WTC11 (cell line): ENCODE measurements at regions of chr14 and their contacts with region 1.

Region 1: DNA sequence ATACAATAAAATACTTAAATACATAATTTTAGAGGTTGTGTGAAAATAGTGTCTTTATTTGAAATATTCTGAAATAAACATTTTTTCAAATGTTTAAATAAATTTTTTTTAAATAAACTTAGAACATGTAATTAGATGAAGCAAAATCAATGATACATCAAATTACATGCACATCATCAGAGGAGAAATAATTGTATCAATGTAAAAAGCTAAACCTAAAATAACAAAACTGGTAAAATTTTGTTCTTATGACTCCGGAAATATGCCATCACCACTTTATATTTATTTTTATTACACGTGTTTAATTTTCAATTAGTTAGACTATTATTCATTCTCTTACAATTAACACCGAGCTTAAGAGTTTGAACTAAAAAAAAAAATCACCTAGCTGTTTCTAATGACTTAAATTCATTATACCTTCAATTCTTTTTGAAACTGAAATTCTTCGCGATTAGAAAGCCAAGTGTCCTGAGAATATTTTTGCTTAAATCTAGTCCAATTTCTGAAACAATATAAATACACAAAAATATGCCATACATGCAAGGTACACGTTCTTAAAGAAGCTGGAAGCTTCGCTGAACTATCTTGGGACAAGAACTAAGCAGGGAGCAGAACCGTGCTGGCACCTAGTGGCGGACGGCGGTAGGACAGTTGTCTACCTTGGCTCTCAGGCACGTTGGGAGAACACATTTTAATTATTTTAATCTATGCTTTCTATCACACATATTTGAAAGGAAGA is 230.5 kb downstream of the SLC25A21 start:
- DNase-seq: peak; percentile 82
- ATAC-seq: peak; percentile 88
- H3K4me3 Mint-ChIP-seq: no peak overlapping the region
- H3K27ac Mint-ChIP-seq: no peak overlapping the region
- H3K4me1 Mint-ChIP-seq: peaks cover 5% of the 10 kb centered on the region; the same call in 1 of the 2 replicates
- H3K27me3 Mint-ChIP-seq: no peaks in the 10 kb centered on the region
- CTCF ChIP-seq: peak; percentile 95

Region 2: DNA sequence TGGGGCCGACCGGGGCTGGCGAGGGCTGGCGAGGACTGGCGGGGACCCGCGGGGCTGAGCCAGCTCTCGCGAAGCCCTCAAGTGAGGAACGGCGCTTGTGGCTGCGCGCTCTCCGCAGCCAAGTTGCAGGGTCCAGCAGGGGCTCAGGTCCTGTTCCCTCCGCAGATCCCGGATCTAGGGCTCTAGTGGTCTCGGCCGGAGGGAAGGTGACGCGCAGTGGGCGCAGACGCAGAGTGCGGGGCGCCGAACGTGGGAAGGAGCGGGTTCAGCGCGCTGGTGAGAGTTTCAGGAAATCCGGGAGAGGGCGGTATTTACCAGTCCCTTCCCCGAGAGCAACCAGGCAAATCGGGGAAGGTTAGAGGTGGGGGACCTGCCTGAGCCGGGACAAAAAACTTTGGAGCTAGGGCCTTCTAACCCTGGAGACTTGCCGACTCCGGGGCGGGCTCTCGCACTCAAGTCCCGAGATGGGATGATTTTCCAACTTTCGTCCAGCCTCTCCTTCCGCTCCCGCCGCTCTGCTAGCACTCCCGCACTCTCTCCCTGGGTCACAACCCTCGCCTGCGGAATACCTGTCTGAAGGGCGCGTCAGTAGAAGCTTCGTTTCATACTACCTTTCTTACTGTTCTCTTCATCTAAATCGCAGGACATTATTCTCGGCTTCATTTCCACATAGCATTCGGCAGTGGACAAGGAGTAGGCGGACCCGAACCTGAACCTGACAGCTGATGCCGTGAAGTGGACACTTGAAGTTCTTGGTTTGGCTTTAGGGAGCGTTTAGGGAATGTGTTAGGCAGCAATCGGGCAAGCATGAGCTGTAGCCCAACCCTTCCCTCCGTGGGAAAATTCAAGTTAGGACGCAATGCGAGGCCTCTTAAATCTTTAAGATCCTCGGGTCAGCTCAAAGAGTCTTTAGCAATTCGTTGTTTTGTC is 293.9 kb before region 1 on chr14:
- CTCF ChIA-PET with region 1: interaction called, 79 read pairs
- POLR2A ChIA-PET with region 1: no interaction called
- DNase-seq: peak; percentile 70
- ATAC-seq: peak; percentile 83
- H3K4me3 Mint-ChIP-seq: peak overlapping the region; percentile 69
- H3K27ac Mint-ChIP-seq: no peak overlapping the region
- H3K4me1 Mint-ChIP-seq: peaks cover 8% of the 10 kb centered on the region
- H3K27me3 Mint-ChIP-seq: peaks cover 100% of the 10 kb centered on the region
- CTCF ChIP-seq: no peak; the same call in 1 of the 2 replicates

Region 3: DNA sequence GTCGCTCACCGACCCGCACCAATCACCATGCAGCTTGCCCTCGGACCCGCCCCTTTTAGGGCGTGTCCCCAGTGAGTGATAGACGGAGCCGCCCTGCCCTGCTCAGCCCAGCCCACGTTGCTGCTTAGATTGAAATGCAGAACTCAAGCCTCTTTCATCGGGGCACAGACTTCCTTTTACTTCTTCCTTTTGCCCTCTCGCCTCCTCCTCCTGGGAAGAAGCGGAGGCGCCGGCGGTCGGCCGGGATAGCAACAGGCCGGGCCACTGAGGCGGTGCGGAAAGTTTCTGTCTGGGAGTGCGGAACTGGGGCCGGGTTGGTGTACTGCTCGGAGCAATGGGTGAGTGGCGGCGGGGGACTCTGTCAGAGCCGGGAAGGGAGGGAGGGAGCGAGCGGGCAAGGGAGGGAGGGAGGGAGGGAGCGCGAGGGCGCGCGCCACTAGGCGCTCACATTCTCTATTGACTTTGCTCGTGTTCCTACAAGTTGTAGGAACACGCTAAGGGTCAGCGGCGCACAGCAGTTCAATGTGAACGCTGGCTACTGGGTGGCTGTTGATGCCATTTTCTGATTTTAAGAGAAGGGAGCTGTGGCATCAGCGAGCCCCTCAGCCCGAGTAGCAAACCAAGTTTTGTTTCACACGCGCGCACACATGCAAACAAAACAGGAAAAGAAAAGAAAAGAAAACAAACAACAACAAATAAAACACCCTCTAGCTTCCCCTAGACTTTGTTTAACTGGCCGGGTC is 280.0 kb before region 1 on chr14 and contains the start of gene PAX9:
- CTCF ChIA-PET with region 1: interaction called, 31 read pairs
- POLR2A ChIA-PET with region 1: interaction called, 3 read pairs
- DNase-seq: peak; percentile 96
- ATAC-seq: peak; percentile 81
- H3K4me3 Mint-ChIP-seq: peak within 1 kb of the TSS; percentile 76
- H3K27ac Mint-ChIP-seq: no peak within 1 kb of the TSS
- H3K4me1 Mint-ChIP-seq: peaks cover 51% of the 10 kb centered on the region
- H3K27me3 Mint-ChIP-seq: peaks cover 100% of the 10 kb centered on the region
- CTCF ChIP-seq: no peak
- total RNA-seq, gene PAX9: not detected in 3 replicates

Region 4: DNA sequence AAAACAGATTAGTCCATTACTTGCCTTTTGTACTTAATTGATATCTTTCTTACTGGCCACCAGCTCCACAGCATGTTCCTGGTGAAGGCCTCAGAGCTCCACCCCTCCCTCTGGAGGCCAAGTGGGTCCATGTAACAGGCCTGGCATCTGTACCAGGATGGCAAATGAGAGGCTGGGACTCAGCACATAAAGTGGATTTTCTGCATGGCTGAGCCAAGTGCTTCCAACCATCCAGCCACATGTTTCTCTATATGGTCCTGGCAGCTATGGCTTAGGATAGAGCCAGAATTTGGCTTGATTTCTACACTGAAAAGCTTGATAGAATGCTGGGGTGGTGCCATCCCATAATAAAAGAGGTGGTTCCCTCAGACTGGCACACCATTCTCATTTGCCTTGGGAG is 186.2 kb before region 1 on chr14:
- CTCF ChIA-PET with region 1: interaction called, 10 read pairs
- POLR2A ChIA-PET with region 1: no interaction called
- DNase-seq: no peak
- ATAC-seq: no peak
- H3K4me3 Mint-ChIP-seq: no peak overlapping the region
- H3K27ac Mint-ChIP-seq: no peak overlapping the region
- H3K4me1 Mint-ChIP-seq: peaks cover 15% of the 10 kb centered on the region
- H3K27me3 Mint-ChIP-seq: no peaks in the 10 kb centered on the region
- CTCF ChIP-seq: no peak

Region 5: GRCh38 chr14:36773136-36773540 is 168.8 kb before region 1 on chr14:
- CTCF ChIA-PET with region 1: interaction called, 15 read pairs
- POLR2A ChIA-PET with region 1: interaction called, 3 read pairs
- DNase-seq: no peak
- ATAC-seq: peak; percentile 73
- H3K4me3 Mint-ChIP-seq: no peak overlapping the region
- H3K27ac Mint-ChIP-seq: no peak overlapping the region
- H3K4me1 Mint-ChIP-seq: peaks cover 10% of the 10 kb centered on the region
- H3K27me3 Mint-ChIP-seq: no peaks in the 10 kb centered on the region
- CTCF ChIP-seq: no peak

Region 6: DNA sequence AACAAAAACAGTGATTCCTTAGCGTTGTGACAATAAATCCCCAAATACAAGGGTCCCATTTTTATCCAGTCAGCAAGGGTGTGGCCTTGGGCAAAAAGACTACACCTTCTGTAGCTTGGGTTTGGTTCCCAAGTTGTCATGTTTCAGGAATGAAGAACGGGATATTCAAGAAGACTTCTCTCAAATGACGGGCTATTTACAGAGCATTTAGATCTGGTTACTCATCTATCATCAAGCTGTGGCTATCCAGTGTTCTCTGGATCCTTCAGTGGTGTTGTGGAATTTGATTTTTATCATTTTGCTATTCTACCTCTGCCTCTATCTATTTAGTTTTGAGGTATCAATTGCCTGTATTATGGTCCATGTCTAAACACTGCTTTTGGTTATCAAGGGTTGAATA is 10.8 kb after region 1 on chr14:
- CTCF ChIA-PET with region 1: interaction called, 17 read pairs
- POLR2A ChIA-PET with region 1: no interaction called
- DNase-seq: no peak
- ATAC-seq: no peak
- H3K4me3 Mint-ChIP-seq: no peak overlapping the region
- H3K27ac Mint-ChIP-seq: no peak overlapping the region
- H3K4me1 Mint-ChIP-seq: peaks cover 32% of the 10 kb centered on the region
- H3K27me3 Mint-ChIP-seq: no peaks in the 10 kb centered on the region
- CTCF ChIP-seq: no peak

Region 7: GRCh38 chr14:37124615-37125014 is 182.7 kb after region 1 on chr14:
- CTCF ChIA-PET with region 1: interaction called, 10 read pairs
- POLR2A ChIA-PET with region 1: no interaction called
- DNase-seq: peak; percentile 45
- ATAC-seq: peak; percentile 88
- H3K4me3 Mint-ChIP-seq: no peak overlapping the region
- H3K27ac Mint-ChIP-seq: no peak overlapping the region
- H3K4me1 Mint-ChIP-seq: peaks cover 2% of the 10 kb centered on the region; the same call in 1 of the 2 replicates
- H3K27me3 Mint-ChIP-seq: no peaks in the 10 kb centered on the region
- CTCF ChIP-seq: no peak